ENCODE measurements at regions of chr10 and their contacts with region 1.

Region 1: GRCh38 chr10:114499630-114500190 is 95.4 kb upstream of the AFAP1L2 start:
- DNase-seq: peak in 8 of 10 donors; percentile 25 to 70 (median 59)
- ATAC-seq: peak; percentile 51 to 61
- H3K4me3 Mint-ChIP-seq: peak overlapping the region; percentile 40 to 82 (median 72)
- H3K27ac Mint-ChIP-seq: peak overlapping the region; percentile 79 to 97 (median 94)
- H3K4me1 Mint-ChIP-seq: peaks cover 47 to 94% (median 91%) of the 10 kb centered on the region in 4 donors
- H3K27me3 Mint-ChIP-seq: no peaks in the 10 kb centered on the region

Region 2: DNA sequence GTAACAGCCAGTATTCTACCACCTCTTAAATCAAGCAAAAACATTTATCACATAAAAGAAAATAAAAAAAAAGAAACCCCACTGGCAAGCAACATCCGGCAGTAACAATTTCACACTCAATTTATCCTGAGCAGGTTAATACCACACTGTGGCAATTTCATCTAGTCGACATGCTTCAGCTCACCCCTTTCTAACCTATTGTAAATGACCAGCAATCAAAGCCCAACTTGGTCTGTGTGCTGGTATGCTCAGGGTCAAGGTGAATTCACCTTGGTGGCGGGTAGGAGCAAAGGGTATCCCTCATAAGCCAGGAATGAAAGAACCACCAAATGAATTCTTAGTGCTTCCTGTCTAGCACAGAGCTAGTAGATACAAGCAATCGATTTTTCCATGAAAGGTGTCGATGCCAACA is 13.7 kb after region 1 on chr10:
- POLR2A ChIA-PET with region 1: interaction called, 39 read pairs
- DNase-seq: peak in 3 of 10 donors; percentile 38 to 72 (median 65)
- ATAC-seq: peak; percentile 51 to 66
- H3K4me3 Mint-ChIP-seq: peak overlapping the region; percentile 77 to 92 (median 86)
- H3K27ac Mint-ChIP-seq: peak overlapping the region; percentile 94 to 99 (median 98)
- H3K4me1 Mint-ChIP-seq: peaks cover 54 to 94% (median 94%) of the 10 kb centered on the region in 4 donors
- H3K27me3 Mint-ChIP-seq: no peaks in the 10 kb centered on the region

Region 3: GRCh38 chr10:114541081-114541796 is 41.5 kb after region 1 on chr10:
- POLR2A ChIA-PET with region 1: interaction called, 41 read pairs
- DNase-seq: peak; percentile 36 to 93 (median 87)
- ATAC-seq: peak; percentile 77 to 80
- H3K4me3 Mint-ChIP-seq: peak overlapping the region; percentile 50 to 82 (median 73)
- H3K27ac Mint-ChIP-seq: peak overlapping the region; percentile 96 to 100 (median 99)
- H3K4me1 Mint-ChIP-seq: peaks cover 38 to 95% (median 90%) of the 10 kb centered on the region in 4 donors
- H3K27me3 Mint-ChIP-seq: no peaks in the 10 kb centered on the region

Region 4: GRCh38 chr10:114600057-114600456 is 100.3 kb after region 1 on chr10:
- POLR2A ChIA-PET with region 1: no interaction called
- DNase-seq: no peak
- ATAC-seq: no peak
- H3K4me3 Mint-ChIP-seq: no peak overlapping the region
- H3K27ac Mint-ChIP-seq: no peak overlapping the region
- H3K4me1 Mint-ChIP-seq: peaks cover 4 to 9% (median 5%) of the 10 kb centered on the region in 4 donors
- H3K27me3 Mint-ChIP-seq: peaks cover 0 to 13% (median 3%) of the 10 kb centered on the region in 5 donors

Measured in naive thymus-derived CD8-positive, alpha-beta T cell (primary cell).